ENCODE measurements at regions of chr9 and their contacts with region 1.

Region 1: DNA sequence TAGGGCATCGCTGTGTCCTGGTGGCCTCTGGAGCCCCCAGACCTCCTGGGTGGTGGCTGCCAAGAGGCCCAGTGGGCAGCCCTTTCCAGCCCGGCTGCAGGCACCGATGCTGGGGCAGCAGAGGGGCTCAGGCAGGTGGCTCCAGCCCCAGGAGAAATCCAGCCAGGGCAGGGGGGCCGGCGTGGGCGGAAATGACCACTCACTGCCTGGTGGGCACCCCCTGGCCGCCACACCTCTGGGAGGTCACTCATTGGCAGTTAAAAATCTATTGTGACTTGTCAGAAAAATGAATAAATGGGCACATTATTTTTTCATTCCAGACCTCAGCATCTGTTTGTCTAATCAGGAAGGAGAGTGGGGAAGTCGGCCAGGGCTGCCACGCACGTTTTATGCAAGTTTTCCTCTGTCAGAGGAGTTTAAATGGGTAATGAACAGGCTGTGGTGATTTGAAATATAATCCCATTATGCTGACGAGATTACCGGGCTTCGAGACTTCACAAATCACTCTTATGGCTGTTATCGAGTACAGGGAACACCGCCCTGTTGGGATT is 171.9 kb downstream of the GAPVD1 start:
- DNase-seq: peak in 1 of 5 donors; percentile 13
- ATAC-seq: no peak
- H3K4me3 ChIP-seq: no peak overlapping the region
- H3K27ac ChIP-seq: no peak overlapping the region
- H3K4me1 ChIP-seq: no peaks in the 10 kb centered on the region
- H3K27me3 ChIP-seq: no peaks in the 10 kb centered on the region
- CTCF ChIP-seq: no peak
- POLR2A ChIP-seq: no peak

Region 2: GRCh38 chr9:125460840-125461635 is 27.5 kb after region 1 on chr9:
- intact Hi-C with region 1: loop called in 1 of 10 experiments (anchors 5 kb)
- DNase-seq: no peak
- ATAC-seq: peak; percentile 51 to 63 (median 60)
- H3K4me3 ChIP-seq: no peak overlapping the region
- H3K27ac ChIP-seq: no peak overlapping the region
- H3K4me1 ChIP-seq: peaks cover 0 to 10% (median 0%) of the 10 kb centered on the region in 12 donors
- H3K27me3 ChIP-seq: no peaks in the 10 kb centered on the region
- CTCF ChIP-seq: no peak
- POLR2A ChIP-seq: no peak

Measured in heart left ventricle (tissue), 16 donors.